WTC11 (cell line): ENCODE measurements at regions of chr11 and their contacts with region 1.

Region 1: GRCh38 chr11:62665075-62665598 is at the starts of genes C11orf98 and CSKMT:
- DNase-seq: peak; percentile 97
- ATAC-seq: peak; percentile 79
- H3K4me3 Mint-ChIP-seq: peak within 1 kb of the TSS; percentile 97
- H3K27ac Mint-ChIP-seq: peak within 1 kb of the TSS; percentile 95
- H3K4me1 Mint-ChIP-seq: peaks cover 20% of the 10 kb centered on the region
- H3K27me3 Mint-ChIP-seq: no peaks in the 10 kb centered on the region
- CTCF ChIP-seq: no peak
- total RNA-seq, gene C11orf98: 132 to 154 TPM (median 137 TPM) in 3 replicates
- total RNA-seq, gene CSKMT: 60.7 to 75.6 TPM (median 60.9 TPM) in 3 replicates

Region 2: GRCh38 chr11:62573592-62574362 is 91.4 kb before region 1 on chr11 and contains the start of gene EEF1G:
- CTCF ChIA-PET with region 1: no interaction called
- POLR2A ChIA-PET with region 1: interaction called, 14 read pairs
- DNase-seq: peak; percentile 98
- ATAC-seq: peak; percentile 97
- H3K4me3 Mint-ChIP-seq: peak within 1 kb of the TSS; percentile 99
- H3K27ac Mint-ChIP-seq: peak within 1 kb of the TSS; percentile 96
- H3K4me1 Mint-ChIP-seq: peaks cover 37% of the 10 kb centered on the region
- H3K27me3 Mint-ChIP-seq: no peaks in the 10 kb centered on the region
- CTCF ChIP-seq: no peak
- total RNA-seq, gene EEF1G: 1,667 to 1,857 TPM (median 1,846 TPM) in 3 replicates

Region 3: GRCh38 chr11:62612366-62613290 is 52.5 kb before region 1 on chr11 and contains the starts of genes EML3 and ROM1:
- CTCF ChIA-PET with region 1: interaction called, 12 read pairs
- POLR2A ChIA-PET with region 1: interaction called, 8 read pairs
- DNase-seq: peak; percentile 97
- ATAC-seq: peak; percentile 89
- H3K4me3 Mint-ChIP-seq: peak within 1 kb of the TSS; percentile 95
- H3K27ac Mint-ChIP-seq: peak within 1 kb of the TSS; percentile 41; the same call in 1 of the 2 replicates
- H3K4me1 Mint-ChIP-seq: peaks cover 28% of the 10 kb centered on the region
- H3K27me3 Mint-ChIP-seq: peaks cover 9% of the 10 kb centered on the region; the same call in 1 of the 2 replicates
- CTCF ChIP-seq: peak; percentile 93
- total RNA-seq, gene EML3: 45.5 to 54.7 TPM (median 51.1 TPM) in 3 replicates
- total RNA-seq, gene ROM1: 0.78 to 1.6 TPM (median 0.94 TPM) in 3 replicates

Region 4: DNA sequence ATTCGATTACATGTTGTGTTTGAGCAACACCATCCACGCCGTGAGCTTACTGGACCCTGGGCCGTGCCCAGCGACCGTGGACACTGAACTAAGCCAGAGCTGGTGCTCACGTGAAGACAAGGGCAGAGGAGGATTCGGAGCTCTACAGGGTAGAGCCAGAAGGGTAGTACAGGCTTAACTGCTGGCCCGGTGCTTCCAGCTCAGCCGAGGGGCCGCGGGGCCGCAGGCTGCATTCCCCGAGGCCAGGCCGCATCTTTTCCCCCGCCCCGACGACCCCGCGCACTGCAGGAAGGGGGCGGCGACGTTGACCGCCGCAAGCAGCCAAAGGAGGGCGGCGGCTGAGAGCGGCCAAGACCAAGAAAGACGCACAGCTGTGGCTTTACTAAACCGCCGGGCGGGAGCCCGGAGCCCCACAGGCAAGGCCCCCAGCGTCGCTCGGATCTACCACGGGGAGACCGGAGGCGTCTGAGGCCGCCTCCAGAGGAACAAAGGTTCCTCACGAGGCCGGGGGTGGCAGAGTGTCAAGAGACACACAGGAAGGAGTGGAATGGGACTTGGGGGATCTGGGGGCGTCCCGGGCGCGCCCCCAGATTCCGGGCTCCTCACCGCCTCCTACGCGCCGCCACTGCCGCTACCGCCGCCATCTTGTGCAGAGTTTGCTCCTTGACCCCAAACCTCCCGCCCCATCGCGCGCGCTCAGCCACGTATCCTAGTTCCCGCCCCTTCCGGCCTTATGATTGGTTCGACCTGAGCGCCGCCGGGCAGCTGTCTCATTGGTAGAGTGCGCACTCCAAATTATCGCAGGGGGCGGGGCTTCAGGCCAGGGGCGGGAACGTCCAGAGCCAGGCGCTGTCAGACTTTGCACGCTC is 18.9 kb before region 1 on chr11 and contains the start of gene GANAB:
- CTCF ChIA-PET with region 1: interaction called, 4 read pairs
- POLR2A ChIA-PET with region 1: interaction called, 42 read pairs
- DNase-seq: peak; percentile 99
- ATAC-seq: peak; percentile 98
- H3K4me3 Mint-ChIP-seq: peak within 1 kb of the TSS; percentile 99
- H3K27ac Mint-ChIP-seq: peak within 1 kb of the TSS; percentile 96
- H3K4me1 Mint-ChIP-seq: peaks cover 10% of the 10 kb centered on the region
- H3K27me3 Mint-ChIP-seq: no peaks in the 10 kb centered on the region
- CTCF ChIP-seq: no peak
- total RNA-seq, gene GANAB: 323 to 350 TPM (median 327 TPM) in 3 replicates

Region 5: DNA sequence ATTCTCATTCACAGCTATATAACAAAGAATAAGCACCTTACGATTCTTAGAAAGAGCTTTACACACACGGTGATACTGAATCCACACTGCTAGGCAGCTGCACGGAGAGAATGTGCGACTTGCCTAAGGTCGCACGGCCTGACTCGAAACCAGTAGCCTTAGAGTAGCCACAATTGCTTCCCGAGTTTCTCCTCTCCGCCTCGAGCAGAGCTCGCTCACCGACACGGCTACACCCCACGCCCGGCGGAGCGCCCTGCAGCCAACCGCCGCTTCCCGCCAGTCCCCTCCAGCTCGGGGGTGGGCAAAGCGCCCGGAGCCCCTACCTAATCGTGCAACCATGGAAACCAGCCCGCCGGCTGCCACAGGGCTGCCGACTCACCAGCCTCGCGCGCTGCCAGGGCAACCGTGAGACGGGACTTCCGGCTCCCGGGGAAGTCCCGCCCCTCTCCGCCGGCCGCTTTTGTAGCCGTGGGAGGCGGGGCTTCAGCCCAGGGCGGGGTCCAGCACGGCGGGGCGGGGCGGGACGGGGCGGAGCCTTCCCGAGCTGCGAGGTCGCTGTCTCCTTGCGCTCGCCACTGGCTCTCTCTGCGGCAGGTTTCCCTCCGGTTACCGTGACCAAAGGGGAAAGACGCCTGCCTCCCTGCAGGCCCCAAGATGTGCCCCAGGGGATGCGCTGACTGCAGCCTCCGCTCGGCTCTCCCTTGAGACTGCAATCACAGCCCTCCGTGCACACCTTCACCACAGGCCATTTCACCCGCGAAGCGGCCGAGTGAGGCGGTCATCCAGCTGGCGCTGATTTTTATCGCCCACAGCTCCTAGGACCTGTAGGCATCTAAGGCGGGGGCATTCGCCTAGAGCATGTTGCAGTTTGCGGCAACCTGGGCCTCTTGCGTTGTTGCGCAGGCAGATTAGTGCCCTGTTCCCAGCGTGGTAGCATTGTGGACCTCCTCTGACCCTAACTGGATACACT is 41.0 kb after region 1 on chr11:
- CTCF ChIA-PET with region 1: interaction called, 5 read pairs
- POLR2A ChIA-PET with region 1: interaction called, 35 read pairs
- DNase-seq: peak; percentile 96
- ATAC-seq: peak; percentile 61
- H3K4me3 Mint-ChIP-seq: peak overlapping the region; percentile 92
- H3K27ac Mint-ChIP-seq: peak overlapping the region; percentile 98
- H3K4me1 Mint-ChIP-seq: peaks cover 38% of the 10 kb centered on the region
- H3K27me3 Mint-ChIP-seq: no peaks in the 10 kb centered on the region; the same call in 1 of the 2 replicates
- CTCF ChIP-seq: no peak

Region 6: GRCh38 chr11:62737196-62737595 is 72.1 kb after region 1 on chr11:
- CTCF ChIA-PET with region 1: no interaction called
- POLR2A ChIA-PET with region 1: no interaction called
- DNase-seq: no peak
- ATAC-seq: no peak
- H3K4me3 Mint-ChIP-seq: no peak overlapping the region
- H3K27ac Mint-ChIP-seq: no peak overlapping the region
- H3K4me1 Mint-ChIP-seq: no peaks in the 10 kb centered on the region
- H3K27me3 Mint-ChIP-seq: no peaks in the 10 kb centered on the region
- CTCF ChIP-seq: no peak

Region 7: GRCh38 chr11:62753736-62754603 is 88.8 kb after region 1 on chr11 and contains the start of gene ZBTB3:
- CTCF ChIA-PET with region 1: interaction called, 3 read pairs
- POLR2A ChIA-PET with region 1: interaction called, 16 read pairs
- DNase-seq: peak; percentile 97
- ATAC-seq: peak; percentile 91
- H3K4me3 Mint-ChIP-seq: peak within 1 kb of the TSS; percentile 95
- H3K27ac Mint-ChIP-seq: peak within 1 kb of the TSS; percentile 99
- H3K4me1 Mint-ChIP-seq: peaks cover 28% of the 10 kb centered on the region
- H3K27me3 Mint-ChIP-seq: no peaks in the 10 kb centered on the region; the same call in 1 of the 2 replicates
- CTCF ChIP-seq: no peak
- total RNA-seq, gene ZBTB3: 82.3 to 88.1 TPM (median 88.0 TPM) in 3 replicates